ENCODE measurements at regions of chr1 and their contacts with region 1.

Region 1: DNA sequence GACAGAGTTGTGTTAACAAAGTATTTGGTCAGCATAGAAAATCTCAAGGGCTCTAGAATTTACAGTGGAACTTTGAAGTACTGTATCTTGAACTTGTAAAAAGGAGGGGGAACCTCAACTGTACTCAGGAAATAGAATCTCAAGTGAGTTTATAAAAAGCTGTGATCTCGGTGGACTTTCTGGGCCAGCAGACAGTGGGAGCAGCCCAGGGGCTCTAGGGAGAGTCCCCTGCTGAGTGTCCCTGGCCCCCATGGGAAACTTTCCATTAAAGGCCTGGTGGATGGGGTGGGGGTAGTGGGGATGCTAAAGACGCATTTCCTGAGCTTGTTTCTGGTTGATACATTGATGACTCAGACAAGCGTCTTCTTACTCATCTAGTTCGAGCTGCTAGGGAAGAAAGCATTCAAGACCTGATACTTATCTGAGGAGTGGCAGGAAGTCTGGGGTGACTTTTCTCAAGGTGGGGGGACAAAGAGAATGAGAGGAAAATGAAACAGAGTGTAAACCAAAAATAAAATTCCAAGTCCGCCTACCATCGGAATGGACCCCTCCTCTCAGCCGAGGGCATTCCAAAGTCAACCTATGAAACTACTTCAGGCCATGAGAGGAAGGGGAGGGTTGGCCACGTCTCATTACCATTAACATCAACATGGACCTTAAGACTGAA is 65.5 kb downstream of the NID1 start:
- DNase-seq: peak in 8 of 9 donors; percentile 7 to 75 (median 37)
- ATAC-seq: peak; percentile 90
- H3K4me3 ChIP-seq: no peak overlapping the region
- H3K4me3 Mint-ChIP-seq: peak overlapping the region in 9 of 10 donors; percentile 0 to 71 (median 55)
- H3K27ac ChIP-seq: peak overlapping the region; percentile 22
- H3K27ac Mint-ChIP-seq: peak overlapping the region; percentile 19 to 97 (median 80)
- H3K4me1 ChIP-seq: peaks cover 10 to 31% of the 10 kb centered on the region in 2 donors
- H3K4me1 Mint-ChIP-seq: peaks cover 10 to 71% (median 20%) of the 10 kb centered on the region in 7 donors
- H3K27me3 ChIP-seq: no peaks in the 10 kb centered on the region
- H3K27me3 Mint-ChIP-seq: no peaks in the 10 kb centered on the region

Region 2: DNA sequence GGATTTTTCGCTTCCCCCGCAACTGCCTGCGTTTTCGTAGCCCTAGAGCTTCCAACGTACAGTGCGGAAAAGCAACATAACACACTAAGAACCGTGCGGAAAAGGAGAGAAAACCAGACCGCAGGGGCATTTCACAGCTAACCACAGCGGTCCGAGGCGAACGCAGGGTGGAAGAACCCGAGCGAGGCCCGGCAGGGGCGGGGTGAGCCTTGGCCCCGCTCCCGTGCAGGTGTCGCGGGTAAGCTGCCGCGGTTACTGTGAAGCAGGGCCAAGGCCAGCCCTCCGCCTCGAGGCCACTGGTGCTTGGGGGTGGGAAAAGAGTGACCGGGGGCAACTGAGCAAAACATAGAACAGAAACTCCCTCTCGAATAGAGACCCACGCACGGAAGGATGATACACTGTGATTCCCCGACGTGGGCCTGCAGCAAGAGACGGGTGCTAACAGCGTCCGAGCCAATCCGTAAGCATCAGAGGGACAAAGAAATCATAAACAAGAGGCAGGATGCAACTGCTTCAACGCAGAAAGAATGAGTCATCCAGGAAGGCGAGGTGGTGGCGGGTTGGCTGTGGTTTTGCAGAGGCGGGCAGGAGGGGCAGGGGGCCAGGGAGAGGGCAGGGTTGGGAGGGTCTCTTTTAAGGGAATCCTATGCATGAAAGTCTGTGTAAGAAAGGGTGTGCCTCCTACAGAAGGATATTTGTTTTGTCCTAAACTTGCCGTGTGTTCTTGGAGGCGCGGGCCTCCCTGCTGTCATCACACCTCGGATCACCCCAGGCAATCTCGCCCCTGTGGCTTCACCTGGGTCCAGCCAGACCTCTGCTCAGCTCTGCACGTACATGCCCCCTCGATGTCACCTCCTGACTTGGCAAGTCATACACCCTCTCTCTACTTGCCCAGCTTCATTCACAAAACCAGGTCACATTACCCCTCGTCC is 357.1 kb before region 1 on chr1:
- CTCF ChIA-PET with region 1: no interaction called
- POLR2A ChIA-PET with region 1: no interaction called
- intact Hi-C with region 1: loop called in 1 of 2 experiments (anchors 1 kb)
- DNase-seq: peak; percentile 20 to 88 (median 40)
- ATAC-seq: peak; percentile 86
- H3K4me3 ChIP-seq: peak overlapping the region; percentile 42
- H3K4me3 Mint-ChIP-seq: peak overlapping the region; percentile 57 to 90 (median 82)
- H3K27ac ChIP-seq: no peak overlapping the region
- H3K27ac Mint-ChIP-seq: peak overlapping the region; percentile 8 to 95 (median 79)
- H3K4me1 ChIP-seq: peaks cover 4 to 26% of the 10 kb centered on the region in 2 donors
- H3K4me1 Mint-ChIP-seq: peaks cover 15 to 57% (median 19%) of the 10 kb centered on the region in 7 donors
- H3K27me3 ChIP-seq: no peaks in the 10 kb centered on the region
- H3K27me3 Mint-ChIP-seq: peaks cover 19 to 33% (median 29%) of the 10 kb centered on the region in 5 donors

Region 3: DNA sequence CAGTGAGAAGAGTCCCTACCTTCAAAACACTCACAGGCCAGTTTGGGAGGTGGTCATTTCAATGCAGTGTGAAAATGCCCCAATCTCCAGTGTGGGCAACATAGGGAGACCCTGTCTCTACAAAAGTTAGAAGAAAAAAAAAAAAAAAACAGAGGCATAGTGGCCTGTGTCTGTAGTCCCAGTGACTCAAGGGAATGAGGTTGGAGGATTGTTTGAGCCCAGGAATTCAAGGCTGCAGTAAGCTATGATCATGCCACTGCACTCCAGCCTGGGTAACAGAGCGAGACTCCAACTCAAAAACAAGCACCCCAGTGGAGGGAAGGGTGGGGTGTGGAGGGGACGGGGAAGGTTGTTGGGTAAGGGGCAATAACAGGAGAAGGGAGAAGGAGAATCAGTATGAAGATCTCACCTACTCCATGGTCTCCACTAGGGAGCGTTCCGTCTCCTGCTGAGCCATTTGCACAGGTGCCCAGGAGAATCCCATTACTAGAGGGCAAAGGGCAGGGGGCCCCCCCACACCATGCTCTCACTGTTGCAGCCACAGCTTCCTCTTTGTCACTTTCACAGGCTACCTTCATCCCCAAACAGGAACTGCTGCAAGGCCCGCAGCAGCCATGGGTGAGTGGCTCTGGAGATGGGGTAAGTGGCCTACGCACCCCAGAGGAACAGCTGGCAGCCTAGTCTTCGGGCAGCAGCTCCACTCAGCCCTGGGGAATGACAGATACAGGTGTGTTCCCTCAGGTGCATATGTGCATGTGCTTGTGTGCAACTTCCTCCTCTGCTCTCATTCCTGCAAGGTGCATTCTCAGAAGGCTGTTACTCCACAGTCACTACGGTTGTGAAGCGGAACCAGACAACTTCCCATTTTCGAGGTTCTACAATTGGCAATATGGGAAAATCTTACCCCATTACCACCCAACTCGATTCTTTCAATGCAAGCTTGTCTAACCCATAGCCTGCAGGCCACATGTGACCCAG is 44.8 kb before region 1 on chr1:
- CTCF ChIA-PET with region 1: no interaction called
- POLR2A ChIA-PET with region 1: no interaction called
- intact Hi-C with region 1: loop called in 1 of 2 experiments (anchors 1 kb)
- DNase-seq: peak in 8 of 9 donors; percentile 25 to 44 (median 36)
- ATAC-seq: peak; percentile 91
- H3K4me3 ChIP-seq: peak overlapping the region; percentile 41
- H3K4me3 Mint-ChIP-seq: peak overlapping the region; percentile 22 to 79 (median 56)
- H3K27ac ChIP-seq: peak overlapping the region; percentile 9
- H3K27ac Mint-ChIP-seq: peak overlapping the region in 8 of 9 donors; percentile 30 to 89 (median 70)
- H3K4me1 ChIP-seq: peaks cover 30 to 32% of the 10 kb centered on the region in 2 donors
- H3K4me1 Mint-ChIP-seq: peaks cover 35 to 40% (median 39%) of the 10 kb centered on the region in 7 donors
- H3K27me3 ChIP-seq: no peaks in the 10 kb centered on the region
- H3K27me3 Mint-ChIP-seq: peaks cover 0 to 2% (median 0%) of the 10 kb centered on the region in 5 donors

Region 4: GRCh38 chr1:236051242-236051791 is 51.9 kb after region 1 on chr1:
- CTCF ChIA-PET with region 1: no interaction called
- POLR2A ChIA-PET with region 1: no interaction called
- intact Hi-C with region 1: loop called in 1 of 2 experiments (anchors 5 kb)
- DNase-seq: no peak
- ATAC-seq: no peak
- H3K4me3 ChIP-seq: no peak overlapping the region
- H3K4me3 Mint-ChIP-seq: no peak overlapping the region
- H3K27ac ChIP-seq: no peak overlapping the region
- H3K27ac Mint-ChIP-seq: no peak overlapping the region
- H3K4me1 ChIP-seq: no peaks in the 10 kb centered on the region
- H3K4me1 Mint-ChIP-seq: peaks cover 0 to 5% (median 0%) of the 10 kb centered on the region in 7 donors
- H3K27me3 ChIP-seq: peaks cover 0 to 3% of the 10 kb centered on the region in 2 donors
- H3K27me3 Mint-ChIP-seq: peaks cover 14 to 32% (median 20%) of the 10 kb centered on the region in 5 donors

Region 5: GRCh38 chr1:236253918-236254637 is 254.7 kb after region 1 on chr1:
- CTCF ChIA-PET with region 1: no interaction called
- POLR2A ChIA-PET with region 1: no interaction called
- intact Hi-C with region 1: no loop called
- DNase-seq: no peak
- ATAC-seq: no peak
- H3K4me3 ChIP-seq: no peak overlapping the region
- H3K4me3 Mint-ChIP-seq: peak overlapping the region in 1 of 10 donors; percentile 54
- H3K27ac ChIP-seq: no peak overlapping the region
- H3K27ac Mint-ChIP-seq: peak overlapping the region in 1 of 9 donors; percentile 44
- H3K4me1 ChIP-seq: no peaks in the 10 kb centered on the region
- H3K4me1 Mint-ChIP-seq: peaks cover 0 to 29% (median 21%) of the 10 kb centered on the region in 7 donors
- H3K27me3 ChIP-seq: no peaks in the 10 kb centered on the region
- H3K27me3 Mint-ChIP-seq: no peaks in the 10 kb centered on the region

Region 6: GRCh38 chr1:236523701-236524141 is 524.3 kb after region 1 on chr1 and contains the start of gene LGALS8:
- CTCF ChIA-PET with region 1: no interaction called
- POLR2A ChIA-PET with region 1: no interaction called
- intact Hi-C with region 1: loop called in 1 of 2 experiments (anchors 5 kb)
- DNase-seq: peak; percentile 68 to 87 (median 83)
- ATAC-seq: peak; percentile 90
- H3K4me3 ChIP-seq: peak within 1 kb of the TSS; percentile 70
- H3K4me3 Mint-ChIP-seq: peak within 1 kb of the TSS; percentile 93 to 100 (median 99)
- H3K27ac ChIP-seq: peak within 1 kb of the TSS; percentile 87
- H3K27ac Mint-ChIP-seq: peak within 1 kb of the TSS; percentile 97 to 99 (median 98)
- H3K4me1 ChIP-seq: peaks cover 4 to 5% of the 10 kb centered on the region in 2 donors
- H3K4me1 Mint-ChIP-seq: peaks cover 8 to 38% (median 35%) of the 10 kb centered on the region in 7 donors
- H3K27me3 ChIP-seq: no peaks in the 10 kb centered on the region
- H3K27me3 Mint-ChIP-seq: peaks cover 0 to 3% (median 0%) of the 10 kb centered on the region in 5 donors
- total RNA-seq, gene LGALS8: 114 to 143 (median 134) TPM

Measured in naive thymus-derived CD4-positive, alpha-beta T cell (primary cell).